ENCODE measurements at regions of chr20 and their contacts with region 1.

Region 1: DNA sequence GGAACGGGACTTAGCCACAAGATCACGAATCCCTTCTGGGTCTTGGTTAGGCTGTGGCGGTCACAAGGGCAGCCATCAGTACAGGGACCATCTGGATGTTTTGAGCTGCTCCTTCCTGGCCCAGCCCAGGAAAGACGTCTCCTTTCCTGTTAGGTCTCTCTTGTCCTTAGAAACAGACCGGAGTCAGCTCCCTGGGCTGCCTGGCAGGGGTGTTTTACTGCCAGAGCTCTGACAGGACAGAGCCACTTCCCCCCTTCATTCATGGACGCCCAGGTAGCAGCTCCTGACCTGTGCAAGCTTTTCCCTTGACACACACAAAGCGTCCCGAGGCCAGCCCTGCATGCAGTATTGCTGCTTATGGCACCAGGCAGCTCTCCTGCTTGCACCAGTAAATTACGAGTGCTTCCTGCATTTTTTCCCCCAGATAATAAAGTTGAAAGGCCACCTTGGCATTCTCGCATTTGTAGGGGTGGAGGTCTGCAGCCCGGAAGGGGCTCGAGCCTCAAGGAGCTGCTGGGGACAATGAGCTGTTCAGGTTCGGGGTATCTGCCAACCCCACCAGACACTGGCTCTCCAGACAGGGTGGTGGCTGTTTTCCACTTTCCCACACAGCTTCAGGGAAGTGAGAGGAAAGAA is 87.4 kb downstream of the NOL4L start:
- DNase-seq: no peak
- H3K4me3 ChIP-seq: no peak overlapping the region
- CTCF ChIP-seq: no peak

Region 2: DNA sequence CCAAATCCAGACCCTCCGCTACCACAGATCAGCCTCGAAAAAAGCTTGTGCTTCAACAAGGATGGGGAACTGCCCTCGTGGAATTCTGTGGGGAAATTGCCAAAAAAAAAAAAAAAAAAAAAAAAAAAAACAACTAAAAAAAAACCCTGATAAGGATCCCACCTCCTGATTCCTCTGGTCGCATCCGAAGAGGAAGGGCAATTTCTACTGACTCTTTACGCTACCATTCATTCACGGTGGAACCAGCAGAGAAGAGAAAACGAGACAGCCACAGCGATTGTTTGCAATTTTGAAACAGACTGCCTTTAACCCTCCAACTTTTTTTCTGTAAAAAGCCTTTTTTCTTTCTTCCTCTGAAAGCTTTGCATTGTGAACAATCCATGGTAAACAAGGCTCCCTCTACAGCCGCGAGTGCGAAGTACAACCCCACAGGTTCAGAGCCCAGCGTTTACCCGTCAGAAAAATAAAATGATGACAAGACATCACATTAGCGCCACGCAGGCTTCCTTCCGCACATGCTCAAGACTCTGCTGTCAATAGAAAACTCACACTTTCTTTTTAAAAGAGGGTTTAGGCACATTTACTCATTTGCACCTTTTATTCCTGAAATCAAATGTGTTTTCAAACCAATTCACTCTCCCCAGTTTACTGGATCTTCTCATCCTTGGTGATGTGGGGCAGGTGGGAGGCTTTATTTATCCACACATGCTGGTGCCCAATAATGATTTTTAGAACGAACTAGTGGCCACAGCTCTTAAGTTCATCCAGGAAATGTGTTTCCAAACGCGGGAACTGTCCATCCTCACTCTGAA is 12.5 kb before region 1 on chr20:
- CTCF ChIA-PET with region 1: interaction called, 26 read pairs
- POLR2A ChIA-PET with region 1: no interaction called
- DNase-seq: peak; percentile 26
- H3K4me3 ChIP-seq: peak overlapping the region; percentile 65
- CTCF ChIP-seq: peak; percentile 76

Region 3: DNA sequence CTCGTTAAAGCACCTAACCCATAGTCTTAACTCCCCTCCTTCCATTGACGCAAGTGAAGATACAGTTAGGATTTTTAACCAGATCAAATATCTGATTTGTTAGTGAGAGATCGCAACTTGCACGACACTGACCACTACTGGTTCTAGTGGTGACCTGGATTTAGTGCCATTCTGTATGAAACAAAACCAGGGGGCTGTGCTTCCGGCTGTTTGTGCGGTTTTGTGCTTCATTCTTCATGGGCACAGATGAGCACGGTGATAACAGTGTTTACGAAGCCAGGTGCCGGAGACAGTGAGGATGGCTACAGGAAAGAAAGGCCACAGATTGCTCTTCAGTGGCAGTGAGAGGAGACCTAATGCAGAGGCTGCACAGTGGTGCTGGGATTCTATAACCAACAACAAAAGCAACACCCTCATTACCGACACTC is 11.9 kb after region 1 on chr20:
- CTCF ChIA-PET with region 1: interaction called, 11 read pairs
- POLR2A ChIA-PET with region 1: interaction called, 3 read pairs
- DNase-seq: no peak
- H3K4me3 ChIP-seq: no peak overlapping the region
- CTCF ChIP-seq: peak; percentile 7

Measured in AG04449 (cell line).